Heart left ventricle (tissue), 16 donors: ENCODE measurements at regions of chr14 and their contacts with region 1.

Region 1: GRCh38 chr14:64715628-64716412 is 11.6 kb downstream of the PLEKHG3 start:
- DNase-seq: peak in 2 of 5 donors; percentile 38 to 59
- ATAC-seq: peak; percentile 21 to 66 (median 46)
- H3K4me3 ChIP-seq: peak overlapping the region in 11 of 12 donors; percentile 0 to 52 (median 42)
- H3K27ac ChIP-seq: peak overlapping the region in 10 of 12 donors; percentile 38 to 84 (median 62)
- H3K4me1 ChIP-seq: peaks cover 0 to 81% (median 38%) of the 10 kb centered on the region in 12 donors
- H3K27me3 ChIP-seq: no peaks in the 10 kb centered on the region
- CTCF ChIP-seq: no peak
- POLR2A ChIP-seq: no peak

Region 2: DNA sequence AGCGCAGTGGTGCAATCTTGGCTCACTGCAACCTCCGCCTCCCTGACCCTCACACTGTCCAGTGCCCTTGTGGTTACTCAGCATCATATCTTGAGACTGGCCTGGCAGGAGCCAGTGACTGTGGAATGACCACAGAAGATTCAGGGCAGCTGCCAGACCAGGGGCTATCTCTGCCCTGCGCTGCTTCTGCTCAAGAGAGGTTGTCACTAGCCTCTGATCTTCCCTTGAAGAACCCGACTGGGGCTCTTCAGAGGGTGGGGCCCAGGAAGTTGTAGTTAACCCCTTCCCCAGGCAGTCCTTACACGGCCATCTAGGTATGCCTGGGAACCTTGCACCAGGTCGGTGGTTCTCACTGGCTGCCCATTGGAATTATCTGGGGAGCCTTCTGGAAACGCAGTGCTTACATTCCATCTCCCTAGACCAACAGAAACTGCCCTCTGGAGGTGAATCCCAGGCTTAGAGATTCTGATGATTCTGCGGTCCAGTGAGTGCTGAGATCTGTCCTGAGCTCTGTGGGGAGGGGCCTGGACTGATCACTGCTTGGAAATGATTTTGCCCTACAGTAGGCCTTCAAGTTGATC is 29.8 kb after region 1 on chr14:
- intact Hi-C with region 1: no loop called
- DNase-seq: no peak
- ATAC-seq: peak; percentile 27 to 51 (median 48)
- H3K4me3 ChIP-seq: no peak overlapping the region
- H3K27ac ChIP-seq: peak overlapping the region in 9 of 12 donors; percentile 26 to 65 (median 42)
- H3K4me1 ChIP-seq: peaks cover 0 to 25% (median 20%) of the 10 kb centered on the region in 12 donors
- H3K27me3 ChIP-seq: no peaks in the 10 kb centered on the region
- CTCF ChIP-seq: peak in 6 of 12 donors; percentile 17 to 40 (median 32)
- POLR2A ChIP-seq: no peak

Region 3: GRCh38 chr14:64758691-64759584 is 43.1 kb after region 1 on chr14:
- intact Hi-C with region 1: loop called in 1 of 10 experiments (anchors 5 kb)
- DNase-seq: peak in 4 of 5 donors; percentile 57 to 73 (median 66)
- ATAC-seq: peak in 3 of 4 donors; percentile 25 to 63 (median 51)
- H3K4me3 ChIP-seq: no peak overlapping the region
- H3K27ac ChIP-seq: peak overlapping the region in 11 of 12 donors; percentile 54 to 87 (median 73)
- H3K4me1 ChIP-seq: peaks cover 0 to 81% (median 69%) of the 10 kb centered on the region in 12 donors
- H3K27me3 ChIP-seq: no peaks in the 10 kb centered on the region
- CTCF ChIP-seq: no peak
- POLR2A ChIP-seq: no peak